CD8-positive, alpha-beta memory T cell (primary cell): ENCODE measurements at regions of chr17 and their contacts with region 1.

Region 1: DNA sequence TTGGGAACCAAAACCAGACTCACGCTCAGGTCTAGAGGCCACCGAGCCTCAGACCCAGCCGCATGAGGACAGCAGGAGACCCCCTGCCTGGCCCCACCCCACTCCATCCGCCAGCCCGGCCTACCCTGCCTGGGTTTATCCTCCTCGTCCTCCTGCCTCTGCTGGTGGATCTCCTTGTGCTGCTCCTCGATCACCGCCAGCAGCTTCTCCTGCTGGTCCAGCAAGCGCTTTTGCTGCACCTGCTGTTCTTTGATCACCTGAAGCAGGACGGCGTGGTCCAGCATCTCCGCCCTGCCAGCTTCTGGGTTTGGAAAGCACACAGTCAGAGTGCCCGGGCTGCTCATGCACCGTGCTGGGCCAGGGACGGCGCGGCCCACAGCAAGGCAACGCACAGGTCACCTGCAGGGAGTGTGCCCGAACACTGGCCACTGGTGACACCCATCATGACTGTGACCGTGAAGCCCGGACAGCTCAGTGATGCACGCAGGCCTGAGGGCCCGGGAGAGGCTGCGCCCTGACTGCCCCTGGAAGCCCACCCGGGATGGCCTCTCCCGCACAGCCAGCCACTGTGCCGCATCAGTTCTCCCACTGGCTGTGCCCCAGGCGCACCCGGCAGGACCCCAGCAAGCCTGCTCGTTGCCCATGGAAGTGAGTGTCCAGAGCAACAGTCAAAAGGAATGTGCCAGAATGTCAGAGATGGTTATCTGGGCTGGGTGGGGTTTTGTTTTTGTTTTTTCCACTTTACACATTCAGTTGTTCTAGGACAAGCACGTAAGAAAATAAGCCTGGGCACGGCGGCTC is 7.8 kb downstream of the NDUFAF8 start:
- DNase-seq: no peak
- H3K4me3 ChIP-seq: no peak overlapping the region
- H3K4me3 Mint-ChIP-seq: peak overlapping the region in 1 of 7 donors; percentile 74
- H3K27ac ChIP-seq: no peak overlapping the region
- H3K27ac Mint-ChIP-seq: peak overlapping the region in 1 of 8 donors; percentile 36
- H3K4me1 ChIP-seq: no peaks in the 10 kb centered on the region
- H3K4me1 Mint-ChIP-seq: peaks cover 0 to 10% (median 6%) of the 10 kb centered on the region in 3 donors
- H3K27me3 ChIP-seq: no peaks in the 10 kb centered on the region
- H3K27me3 Mint-ChIP-seq: peaks cover 0 to 2% of the 10 kb centered on the region in 2 donors

Region 2: DNA sequence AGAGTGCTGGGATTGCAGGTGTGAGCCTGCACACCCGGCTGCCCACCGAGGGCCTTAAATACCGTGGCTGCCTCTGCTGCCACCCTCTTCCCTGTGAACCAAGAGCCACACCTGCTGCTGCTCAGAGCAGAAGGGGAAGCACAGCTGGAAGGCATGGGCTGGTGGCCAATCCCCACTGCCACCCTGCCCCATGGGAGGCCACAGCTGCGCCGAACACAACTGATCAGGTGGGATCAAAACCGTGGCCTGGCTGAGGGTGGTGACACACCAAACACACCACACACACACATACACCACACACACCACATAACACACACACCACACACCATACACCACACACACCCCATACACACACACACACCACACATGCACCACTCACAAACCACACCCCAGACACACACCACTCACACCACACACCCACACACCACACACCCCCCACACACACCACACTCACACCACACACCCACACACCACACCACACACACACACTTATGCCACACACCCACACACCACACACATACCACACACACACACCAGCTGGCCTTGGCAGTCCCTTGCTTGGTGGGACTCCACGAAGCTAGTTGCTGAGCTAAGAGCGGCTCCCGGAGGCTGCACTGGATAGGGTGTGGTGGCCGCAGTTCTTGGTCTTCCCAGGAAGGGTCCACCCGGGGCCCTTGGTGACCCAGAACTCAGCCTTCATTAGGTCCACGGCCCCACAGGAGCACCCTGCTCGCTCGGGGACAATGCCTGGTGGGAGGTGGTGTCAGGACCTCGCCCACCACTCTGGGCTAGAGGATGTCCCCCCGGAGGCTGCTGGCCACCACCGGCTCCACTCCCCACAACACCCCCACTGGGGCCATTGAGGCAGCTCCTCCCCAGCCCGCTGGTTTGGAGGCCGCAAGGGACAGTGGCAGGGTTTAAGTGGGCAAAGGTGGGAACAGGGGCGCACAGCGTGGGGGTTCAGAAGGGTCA is 39.1 kb before region 1 on chr17:
- CTCF ChIA-PET with region 1: no interaction called
- POLR2A ChIA-PET with region 1: no interaction called
- DNase-seq: no peak
- H3K4me3 ChIP-seq: no peak overlapping the region
- H3K4me3 Mint-ChIP-seq: no peak overlapping the region
- H3K27ac ChIP-seq: no peak overlapping the region
- H3K27ac Mint-ChIP-seq: peak overlapping the region in 1 of 8 donors; percentile 4
- H3K4me1 ChIP-seq: no peaks in the 10 kb centered on the region
- H3K4me1 Mint-ChIP-seq: no peaks in the 10 kb centered on the region
- H3K27me3 ChIP-seq: no peaks in the 10 kb centered on the region
- H3K27me3 Mint-ChIP-seq: no peaks in the 10 kb centered on the region

Region 3: DNA sequence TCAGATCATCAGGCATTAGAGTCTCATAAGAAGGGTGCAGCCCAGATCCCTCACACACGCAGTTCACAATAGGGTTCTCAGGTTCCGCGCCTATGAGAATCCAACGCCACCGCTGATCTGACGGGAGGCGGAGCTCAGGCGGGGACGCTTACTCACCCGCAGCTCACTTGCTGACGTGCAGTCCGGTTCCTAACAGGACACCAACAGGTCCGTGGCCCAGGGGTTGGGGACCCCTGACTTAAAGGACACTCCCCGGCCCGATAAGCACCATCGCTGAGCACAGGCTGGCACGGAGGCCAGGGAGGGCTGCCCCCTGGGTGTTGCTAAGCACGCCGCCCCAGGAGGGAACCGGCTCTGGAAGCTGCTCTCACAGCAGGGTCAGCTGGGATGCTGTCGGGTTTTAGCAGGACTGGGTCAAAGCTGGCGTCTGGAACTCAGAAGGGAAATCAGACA is 118.2 kb after region 1 on chr17:
- CTCF ChIA-PET with region 1: no interaction called
- POLR2A ChIA-PET with region 1: interaction called, 10 read pairs
- DNase-seq: no peak
- H3K4me3 ChIP-seq: peak overlapping the region; percentile 29
- H3K4me3 Mint-ChIP-seq: peak overlapping the region in 5 of 7 donors; percentile 43 to 66 (median 59)
- H3K27ac ChIP-seq: peak overlapping the region; percentile 66
- H3K27ac Mint-ChIP-seq: no peak overlapping the region
- H3K4me1 ChIP-seq: peaks cover 14% of the 10 kb centered on the region
- H3K4me1 Mint-ChIP-seq: peaks cover 15 to 18% (median 15%) of the 10 kb centered on the region in 3 donors
- H3K27me3 ChIP-seq: peaks cover 14% of the 10 kb centered on the region
- H3K27me3 Mint-ChIP-seq: peaks cover 35 to 55% of the 10 kb centered on the region in 2 donors